ENCODE measurements at regions of chr17 and their contacts with region 1.

Region 1: GRCh38 chr17:76121932-76122430 is 18.4 kb upstream of the EXOC7 start:
- DNase-seq: no peak
- H3K4me3 ChIP-seq: peak overlapping the region in 1 of 4 donors; percentile 41
- H3K27ac ChIP-seq: peak overlapping the region in 1 of 5 donors; percentile 12
- H3K4me1 ChIP-seq: peaks cover 0 to 4% of the 10 kb centered on the region in 2 donors
- H3K27me3 ChIP-seq: no peaks in the 10 kb centered on the region
- CTCF ChIP-seq: no peak
- POLR2A ChIP-seq: no peak

Region 2: DNA sequence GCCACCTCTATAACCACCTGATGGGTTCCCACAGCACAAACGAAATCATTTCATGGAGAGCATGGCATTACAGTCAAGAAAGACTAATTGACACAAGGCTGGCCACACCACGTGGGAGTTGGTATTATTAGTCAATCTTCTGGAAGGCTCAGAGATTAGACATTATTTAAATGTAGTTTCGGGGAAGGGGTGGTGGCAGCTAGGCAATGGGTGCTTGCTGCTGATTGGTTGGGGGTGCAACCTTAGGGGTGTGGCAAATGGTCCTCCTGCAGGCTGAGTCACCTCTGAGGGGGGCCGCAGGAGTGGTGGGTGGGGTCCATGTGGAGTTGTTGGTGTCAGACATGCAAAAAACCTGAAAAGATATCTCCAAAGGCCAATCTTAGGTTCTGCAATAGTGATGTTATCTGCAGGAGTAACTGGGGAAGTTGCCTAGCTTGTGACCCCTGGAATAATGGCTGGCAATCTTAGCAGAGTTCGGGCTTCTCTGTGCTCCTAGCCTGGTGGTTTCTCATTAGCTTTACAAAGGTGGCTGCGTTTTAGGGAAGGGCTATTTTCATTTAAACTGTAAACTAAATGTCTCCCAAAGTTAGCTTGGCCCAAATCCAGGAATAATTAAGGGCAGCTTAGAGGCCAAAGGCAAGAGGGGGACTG is 138.3 kb before region 1 on chr17:
- intact Hi-C with region 1: no loop called
- DNase-seq: peak in 6 of 7 donors; percentile 59 to 87 (median 76)
- H3K4me3 ChIP-seq: no peak overlapping the region
- H3K27ac ChIP-seq: peak overlapping the region in 2 of 5 donors; percentile 56 to 99
- H3K4me1 ChIP-seq: peaks cover 14 to 44% of the 10 kb centered on the region in 2 donors
- H3K27me3 ChIP-seq: no peaks in the 10 kb centered on the region
- CTCF ChIP-seq: no peak
- POLR2A ChIP-seq: no peak

Region 3: DNA sequence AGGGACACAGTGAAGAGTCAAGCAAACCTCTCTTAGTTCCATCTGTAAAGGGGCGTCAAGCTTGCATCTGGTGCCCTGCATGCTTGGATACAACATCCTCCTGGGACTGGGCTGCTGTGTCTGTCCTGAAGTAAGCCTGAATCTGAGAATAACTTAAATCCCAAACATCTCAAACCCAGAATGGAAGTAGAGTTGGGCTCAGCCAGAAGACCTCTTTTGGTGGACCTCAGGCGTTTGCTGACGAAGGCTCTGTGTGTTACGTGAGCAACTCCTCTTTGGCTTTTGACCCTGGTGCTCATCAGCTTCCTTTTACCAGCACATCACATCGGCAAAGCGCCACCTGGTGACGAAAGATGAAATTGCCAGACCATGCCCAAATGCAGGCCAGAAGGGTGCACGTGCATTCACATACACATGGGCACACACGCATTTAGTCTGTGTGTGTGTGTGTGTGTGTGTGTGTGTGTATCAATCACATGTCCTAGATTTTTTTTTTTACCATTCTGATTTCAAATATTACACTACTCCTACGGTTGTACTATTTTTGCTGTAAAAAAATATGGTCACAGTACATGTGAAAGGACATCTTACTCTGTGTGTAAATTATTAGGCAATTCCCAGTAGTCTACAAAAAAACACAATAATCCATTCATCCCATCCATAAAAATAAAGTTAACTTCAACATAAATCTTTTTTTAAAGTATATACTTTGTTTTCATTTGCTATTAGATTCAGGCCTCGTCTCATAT is 60.2 kb after region 1 on chr17:
- intact Hi-C with region 1: loop called in 1 of 2 experiments (anchors 5 kb)
- DNase-seq: peak; percentile 87 to 97 (median 90)
- H3K4me3 ChIP-seq: no peak overlapping the region
- H3K27ac ChIP-seq: no peak overlapping the region
- H3K4me1 ChIP-seq: peaks cover 3% of the 10 kb centered on the region in 2 donors
- H3K27me3 ChIP-seq: no peaks in the 10 kb centered on the region
- CTCF ChIP-seq: peak; percentile 57 to 89 (median 85)
- POLR2A ChIP-seq: no peak

Region 4: GRCh38 chr17:76278952-76279741 is 157.2 kb after region 1 on chr17:
- intact Hi-C with region 1: loop called (anchors 2 kb)
- DNase-seq: peak; percentile 84 to 95 (median 90)
- H3K4me3 ChIP-seq: no peak overlapping the region
- H3K27ac ChIP-seq: no peak overlapping the region
- H3K4me1 ChIP-seq: peaks cover 0 to 5% of the 10 kb centered on the region in 2 donors
- H3K27me3 ChIP-seq: no peaks in the 10 kb centered on the region
- CTCF ChIP-seq: peak; percentile 89 to 99 (median 94)
- POLR2A ChIP-seq: no peak

Region 5: DNA sequence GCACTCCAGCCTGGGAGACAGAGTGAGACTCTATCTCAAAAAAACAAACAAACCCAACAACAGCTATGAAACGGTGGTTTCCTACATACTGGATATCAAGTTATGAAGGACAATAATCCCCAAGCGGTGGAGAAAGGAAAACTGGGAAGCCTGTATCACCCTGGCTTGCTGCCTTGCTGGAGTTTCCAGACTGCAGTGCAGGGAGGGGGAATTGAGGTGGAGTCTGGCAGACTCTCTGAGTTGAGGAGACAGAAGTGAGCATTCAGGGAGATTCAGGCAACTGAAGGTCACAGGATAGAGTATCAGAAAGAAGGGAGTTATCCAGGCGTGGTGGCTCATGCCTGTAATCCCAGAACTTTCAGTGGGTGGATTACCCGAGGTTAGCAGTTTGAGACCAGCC is 174.2 kb after region 1 on chr17:
- intact Hi-C with region 1: loop called in 1 of 2 experiments (anchors 5 kb)
- DNase-seq: peak in 1 of 7 donors; percentile 39
- H3K4me3 ChIP-seq: no peak overlapping the region
- H3K27ac ChIP-seq: no peak overlapping the region
- H3K4me1 ChIP-seq: no peaks in the 10 kb centered on the region
- H3K27me3 ChIP-seq: no peaks in the 10 kb centered on the region
- CTCF ChIP-seq: no peak
- POLR2A ChIP-seq: no peak